Activated CD4-positive, alpha-beta T cell treated with anti-CD3 and anti-CD28 coated beads for 36 hours (primary cell): ENCODE measurements at regions of chr4 and their contacts with region 1.

Region 1: GRCh38 chr4:137065311-137065710 is 467.0 kb downstream of the PCDH18 start:
- DNase-seq: no peak
- ATAC-seq: no peak
- H3K4me3 Mint-ChIP-seq: no peak overlapping the region
- H3K27ac Mint-ChIP-seq: no peak overlapping the region
- H3K4me1 Mint-ChIP-seq: no peaks in the 10 kb centered on the region
- H3K27me3 Mint-ChIP-seq: no peaks in the 10 kb centered on the region

Region 2: DNA sequence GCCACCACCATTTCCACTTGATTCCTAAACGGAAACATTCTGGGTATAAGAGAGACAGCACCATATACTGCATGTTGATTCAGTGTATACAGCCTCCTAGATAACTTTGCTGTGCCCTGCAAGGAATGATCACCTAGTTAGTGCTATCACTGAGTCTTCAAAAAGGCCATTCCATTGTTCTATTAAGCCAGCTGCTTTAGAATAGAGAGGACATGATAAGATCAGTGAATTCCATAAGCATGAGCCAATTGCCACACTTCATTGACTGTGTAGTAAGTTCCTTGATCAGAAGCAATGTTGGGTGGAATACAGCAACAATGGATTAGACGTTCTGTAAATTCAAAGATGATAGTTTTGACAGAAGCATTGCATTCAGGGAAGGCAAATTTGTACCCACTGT is 580.3 kb before region 1 on chr4:
- CTCF ChIA-PET with region 1: no interaction called
- POLR2A ChIA-PET with region 1: no interaction called
- intact Hi-C with region 1: no loop called
- DNase-seq: no peak
- ATAC-seq: no peak
- H3K4me3 Mint-ChIP-seq: no peak overlapping the region
- H3K27ac Mint-ChIP-seq: no peak overlapping the region
- H3K4me1 Mint-ChIP-seq: no peaks in the 10 kb centered on the region
- H3K27me3 Mint-ChIP-seq: no peaks in the 10 kb centered on the region

Region 3: DNA sequence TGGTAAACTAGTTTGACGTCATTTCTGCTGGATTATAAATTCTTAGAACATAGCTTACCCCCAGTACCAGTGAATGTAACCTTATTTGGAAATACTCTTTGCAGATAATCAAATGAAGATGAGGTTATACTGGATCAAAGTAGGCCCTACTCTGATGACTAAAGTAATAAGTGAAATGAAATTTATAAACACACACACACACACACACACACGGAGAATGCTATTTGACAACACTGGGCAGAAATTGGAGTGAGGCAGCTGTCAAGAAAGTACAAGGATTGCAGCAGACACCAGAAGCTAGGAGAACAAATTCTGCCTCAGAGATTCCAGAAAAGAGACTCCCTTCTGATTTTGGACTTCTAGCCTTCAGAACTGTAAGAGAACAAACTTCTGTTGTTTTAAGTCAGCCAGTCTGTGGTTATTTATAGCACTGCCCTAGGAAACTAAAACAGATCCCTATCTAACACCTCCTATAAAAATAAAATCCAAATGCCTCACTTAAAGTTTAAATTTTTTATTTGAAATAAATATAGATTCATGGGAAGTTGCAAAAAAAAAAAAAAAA is 18.3 kb after region 1 on chr4:
- CTCF ChIA-PET with region 1: interaction called, 3 read pairs
- POLR2A ChIA-PET with region 1: interaction called, 12 read pairs
- intact Hi-C with region 1: no loop called
- DNase-seq: no peak
- ATAC-seq: no peak
- H3K4me3 Mint-ChIP-seq: no peak overlapping the region
- H3K27ac Mint-ChIP-seq: no peak overlapping the region
- H3K4me1 Mint-ChIP-seq: no peaks in the 10 kb centered on the region
- H3K27me3 Mint-ChIP-seq: no peaks in the 10 kb centered on the region

Region 4: DNA sequence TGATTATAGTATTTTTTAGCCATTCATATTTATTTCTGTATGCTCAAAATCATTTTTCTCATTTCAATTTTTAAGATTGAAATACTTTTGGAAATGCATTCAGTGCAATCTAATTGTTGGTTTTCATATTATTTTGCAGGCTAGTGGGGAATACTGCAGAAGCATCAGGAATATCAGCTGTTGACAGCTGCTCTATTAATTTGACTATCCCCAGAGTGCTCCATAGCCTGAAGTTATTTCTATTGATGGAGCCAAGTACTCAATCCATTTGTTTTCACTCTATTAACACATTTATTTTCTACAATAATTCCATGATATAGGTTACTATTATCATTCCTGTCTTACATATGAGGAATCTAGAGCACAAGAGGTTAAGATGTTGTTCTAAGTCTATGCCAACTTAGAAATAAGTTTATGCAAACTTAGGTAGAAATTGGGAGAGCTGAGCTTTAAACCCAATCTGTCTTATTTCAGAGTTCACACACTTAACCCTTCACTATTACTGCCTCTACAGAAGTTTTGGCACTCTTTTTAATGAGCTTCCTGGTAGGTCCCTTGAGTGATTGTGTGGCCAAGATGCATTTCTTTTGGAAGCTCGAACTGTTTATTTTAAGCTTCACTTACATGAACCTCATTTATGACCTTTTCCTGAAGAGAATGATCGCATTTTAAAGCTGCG is 532.6 kb after region 1 on chr4:
- CTCF ChIA-PET with region 1: no interaction called
- POLR2A ChIA-PET with region 1: no interaction called
- intact Hi-C with region 1: no loop called
- DNase-seq: no peak
- ATAC-seq: no peak
- H3K4me3 Mint-ChIP-seq: no peak overlapping the region
- H3K27ac Mint-ChIP-seq: no peak overlapping the region
- H3K4me1 Mint-ChIP-seq: no peaks in the 10 kb centered on the region
- H3K27me3 Mint-ChIP-seq: no peaks in the 10 kb centered on the region